Right lobe of liver (tissue), 6 donors: ENCODE measurements at regions of chr10 and their contacts with region 1.

Region 1: GRCh38 chr10:47311932-47312662 is 10.2 kb upstream of the GDF2 start:
- DNase-seq: peak; percentile 83 to 86 (median 85)
- ATAC-seq: peak; percentile 88 to 98 (median 94)
- H3K4me3 ChIP-seq: no peak overlapping the region
- H3K27ac ChIP-seq: no peak overlapping the region
- H3K4me1 ChIP-seq: no peaks in the 10 kb centered on the region
- H3K27me3 ChIP-seq: no peaks in the 10 kb centered on the region
- CTCF ChIP-seq: peak; percentile 81 to 85 (median 84)
- POLR2A ChIP-seq: no peak

Region 2: DNA sequence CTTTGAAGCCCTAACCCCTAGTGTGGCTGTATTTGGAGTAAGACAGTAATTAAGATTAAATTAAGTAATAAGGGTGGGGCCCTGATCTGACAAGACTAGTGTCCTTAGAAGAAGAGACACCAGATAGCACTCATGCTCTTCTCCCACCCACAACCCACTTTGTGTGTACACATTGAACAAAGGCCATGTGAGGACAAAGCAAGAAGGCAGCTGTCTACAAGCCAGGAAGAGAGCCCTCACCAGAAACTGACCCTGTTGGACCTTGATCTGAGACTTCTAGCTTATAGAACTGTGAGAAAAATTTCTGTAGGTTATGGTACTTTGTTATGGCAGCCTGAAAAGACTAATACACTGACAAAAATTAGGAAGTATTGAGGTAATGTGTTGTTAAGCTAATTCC is 1699.4 kb before region 1 on chr10:
- intact Hi-C with region 1: no loop called
- DNase-seq: no peak
- ATAC-seq: no peak
- H3K4me3 ChIP-seq: no peak overlapping the region
- H3K27ac ChIP-seq: no peak overlapping the region
- H3K4me1 ChIP-seq: no peaks in the 10 kb centered on the region
- H3K27me3 ChIP-seq: no peaks in the 10 kb centered on the region
- CTCF ChIP-seq: no peak
- POLR2A ChIP-seq: no peak

Region 3: GRCh38 chr10:47024399-47025252 is 287.5 kb before region 1 on chr10:
- intact Hi-C with region 1: loop called in 1 of 2 experiments (anchors 5 kb)
- DNase-seq: peak; percentile 68 to 72 (median 69)
- ATAC-seq: peak; percentile 83 to 93 (median 88)
- H3K4me3 ChIP-seq: no peak overlapping the region
- H3K27ac ChIP-seq: no peak overlapping the region
- H3K4me1 ChIP-seq: no peaks in the 10 kb centered on the region
- H3K27me3 ChIP-seq: no peaks in the 10 kb centered on the region
- CTCF ChIP-seq: peak; percentile 73 to 88 (median 87)
- POLR2A ChIP-seq: no peak

Region 4: GRCh38 chr10:47047671-47048525 is 264.2 kb before region 1 on chr10:
- intact Hi-C with region 1: loop called (anchors 5 kb)
- DNase-seq: peak; percentile 69 to 78 (median 71)
- ATAC-seq: peak; percentile 59 to 87 (median 76)
- H3K4me3 ChIP-seq: no peak overlapping the region
- H3K27ac ChIP-seq: no peak overlapping the region
- H3K4me1 ChIP-seq: no peaks in the 10 kb centered on the region
- H3K27me3 ChIP-seq: no peaks in the 10 kb centered on the region
- CTCF ChIP-seq: peak; percentile 63 to 91 (median 76)
- POLR2A ChIP-seq: no peak

Region 5: DNA sequence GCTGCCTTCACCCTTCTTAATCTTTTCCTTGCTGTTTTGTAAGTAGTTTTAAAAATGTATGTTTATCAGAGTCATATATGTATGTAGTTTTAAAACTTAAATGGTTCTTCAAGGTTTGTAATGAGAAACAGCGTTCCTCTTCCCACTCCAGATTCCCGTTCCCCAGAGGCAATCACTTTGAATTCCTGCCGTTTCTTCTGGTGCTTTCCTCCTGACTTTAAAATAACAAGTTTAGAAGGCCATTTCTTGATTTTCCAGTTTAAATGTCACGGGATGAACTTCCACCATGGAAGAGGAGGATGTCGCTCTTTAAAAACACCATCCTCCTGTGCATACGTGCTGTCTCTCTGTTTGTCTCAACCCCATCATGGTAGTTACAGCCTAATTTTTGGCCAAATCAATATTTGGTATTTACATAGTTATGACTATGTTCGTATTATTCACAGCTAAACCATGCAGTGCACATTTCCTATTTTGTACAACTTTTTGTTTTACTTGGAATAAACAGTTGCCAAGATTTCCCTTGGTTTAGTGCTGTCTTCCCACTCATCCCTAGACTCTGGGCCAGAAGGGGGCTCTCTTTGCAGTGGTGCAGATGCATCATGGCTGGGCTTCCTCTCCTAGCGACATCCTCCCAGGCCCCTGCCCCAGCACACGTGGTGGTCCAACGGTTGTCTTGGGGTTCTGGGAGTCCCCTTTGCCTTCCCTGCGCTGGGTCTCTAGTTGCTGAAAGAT is 249.5 kb before region 1 on chr10:
- intact Hi-C with region 1: no loop called
- DNase-seq: no peak
- ATAC-seq: no peak
- H3K4me3 ChIP-seq: no peak overlapping the region
- H3K27ac ChIP-seq: no peak overlapping the region
- H3K4me1 ChIP-seq: no peaks in the 10 kb centered on the region
- H3K27me3 ChIP-seq: no peaks in the 10 kb centered on the region
- CTCF ChIP-seq: no peak
- POLR2A ChIP-seq: no peak

Region 6: GRCh38 chr10:47374611-47375536 is 62.8 kb after region 1 on chr10:
- intact Hi-C with region 1: no loop called
- DNase-seq: peak in 1 of 3 donors; percentile 28
- ATAC-seq: no peak
- H3K4me3 ChIP-seq: no peak overlapping the region
- H3K27ac ChIP-seq: no peak overlapping the region
- H3K4me1 ChIP-seq: no peaks in the 10 kb centered on the region
- H3K27me3 ChIP-seq: no peaks in the 10 kb centered on the region
- CTCF ChIP-seq: no peak
- POLR2A ChIP-seq: no peak